ENCODE measurements at regions of chr17 and their contacts with region 1.

Region 1: DNA sequence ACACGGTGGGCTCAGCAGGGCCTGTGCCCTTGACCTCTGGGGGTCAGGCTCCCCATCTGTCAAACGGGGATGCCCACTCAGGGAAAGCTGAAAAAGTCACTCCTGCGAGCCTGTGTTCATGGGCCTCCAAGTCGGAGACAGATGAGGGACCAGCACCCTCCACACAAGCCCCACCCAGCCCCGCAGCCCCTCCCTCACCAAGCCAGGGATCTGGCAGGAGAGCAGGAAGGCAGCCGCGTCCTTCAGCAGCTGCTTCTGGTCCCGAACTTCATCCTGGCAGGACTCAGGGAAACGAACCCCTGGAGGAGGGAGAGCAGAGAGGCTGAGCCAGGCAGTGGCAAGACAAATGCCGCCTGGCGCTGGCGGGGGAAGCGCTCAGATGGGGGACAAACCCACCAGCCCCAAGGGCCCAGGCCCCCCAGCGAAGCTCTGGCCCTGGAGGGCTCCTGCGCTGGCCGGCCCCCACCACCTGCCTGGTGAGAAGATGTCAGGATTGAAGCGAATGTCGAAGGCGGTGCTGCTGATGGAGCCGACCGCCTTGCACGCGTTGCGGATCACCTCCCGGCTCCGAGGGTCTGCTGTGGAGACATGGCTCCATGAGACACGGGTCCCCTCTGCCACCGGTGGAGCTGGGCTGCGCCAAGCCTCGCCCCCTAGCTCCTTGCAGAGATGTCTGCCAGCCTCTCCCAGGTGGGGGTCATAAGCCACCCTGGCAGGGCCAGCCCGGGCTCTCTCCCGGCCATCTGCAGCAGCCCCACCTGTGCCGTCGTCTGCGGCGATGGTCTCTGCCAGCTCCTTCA is 15.4 kb downstream of the CLUH start:
- DNase-seq: no peak
- ATAC-seq: no peak
- H3K4me3 Mint-ChIP-seq: no peak overlapping the region
- H3K27ac Mint-ChIP-seq: no peak overlapping the region
- H3K4me1 Mint-ChIP-seq: no peaks in the 10 kb centered on the region
- H3K27me3 Mint-ChIP-seq: no peaks in the 10 kb centered on the region
- CTCF ChIP-seq: no peak

Region 2: GRCh38 chr17:2685696-2686095 is 10.5 kb before region 1 on chr17:
- CTCF ChIA-PET with region 1: interaction called, 3 read pairs
- POLR2A ChIA-PET with region 1: interaction called, 13 read pairs
- intact Hi-C with region 1: no loop called
- DNase-seq: no peak
- ATAC-seq: no peak
- H3K4me3 Mint-ChIP-seq: no peak overlapping the region
- H3K27ac Mint-ChIP-seq: no peak overlapping the region
- H3K4me1 Mint-ChIP-seq: peaks cover 10% of the 10 kb centered on the region
- H3K27me3 Mint-ChIP-seq: no peaks in the 10 kb centered on the region
- CTCF ChIP-seq: no peak

Region 3: DNA sequence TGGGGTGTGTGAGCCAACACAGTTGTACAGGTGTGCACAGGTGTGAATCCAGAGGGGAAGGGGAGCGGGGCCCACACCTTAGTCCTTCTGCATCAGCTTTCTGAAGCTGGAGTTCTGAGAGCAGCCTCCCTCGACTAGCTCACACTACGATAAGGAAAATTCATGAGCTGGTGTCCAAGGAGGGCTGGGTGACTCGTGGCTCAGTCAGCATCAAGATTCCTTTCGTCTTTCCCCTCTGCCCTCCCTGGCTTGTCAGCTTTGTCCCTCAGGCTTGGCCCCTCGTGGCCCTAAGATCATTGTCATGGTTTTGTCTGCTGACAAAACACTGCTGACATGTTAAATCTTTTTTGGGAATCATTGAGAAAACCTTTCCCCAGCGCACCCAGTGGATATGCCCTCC is 319.7 kb after region 1 on chr17:
- CTCF ChIA-PET with region 1: no interaction called
- POLR2A ChIA-PET with region 1: no interaction called
- intact Hi-C with region 1: no loop called
- DNase-seq: no peak
- ATAC-seq: no peak
- H3K4me3 Mint-ChIP-seq: no peak overlapping the region
- H3K27ac Mint-ChIP-seq: no peak overlapping the region
- H3K4me1 Mint-ChIP-seq: no peaks in the 10 kb centered on the region
- H3K27me3 Mint-ChIP-seq: no peaks in the 10 kb centered on the region
- CTCF ChIP-seq: no peak